ENCODE measurements at regions of chr18 and their contacts with region 1.

Region 1: DNA sequence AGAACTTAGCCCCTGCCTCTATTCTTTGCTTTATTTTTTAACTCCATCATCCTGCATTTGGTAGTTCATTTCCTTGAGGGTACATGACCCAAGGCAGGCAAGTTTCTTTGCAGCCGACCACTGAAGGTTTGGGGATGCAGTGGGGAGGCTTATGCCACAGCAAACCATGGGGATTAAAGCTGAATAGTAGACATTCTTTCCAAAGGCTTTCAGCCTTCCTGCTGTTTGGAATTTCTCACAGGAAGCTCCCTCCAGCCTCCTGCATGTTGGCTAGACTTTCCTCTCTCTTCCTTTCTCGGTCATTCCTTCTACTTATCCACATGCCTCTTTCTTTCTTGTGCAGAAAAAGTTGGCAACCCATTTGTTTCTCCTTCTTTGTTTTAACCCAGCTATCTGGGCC is 77.3 kb downstream of the SOCS6 start:
- DNase-seq: no peak
- CTCF ChIP-seq: no peak

Region 2: GRCh38 chr18:70015127-70015526 is 351.0 kb before region 1 on chr18:
- CTCF ChIA-PET with region 1: no interaction called
- POLR2A ChIA-PET with region 1: no interaction called
- DNase-seq: no peak
- CTCF ChIP-seq: no peak

Region 3: DNA sequence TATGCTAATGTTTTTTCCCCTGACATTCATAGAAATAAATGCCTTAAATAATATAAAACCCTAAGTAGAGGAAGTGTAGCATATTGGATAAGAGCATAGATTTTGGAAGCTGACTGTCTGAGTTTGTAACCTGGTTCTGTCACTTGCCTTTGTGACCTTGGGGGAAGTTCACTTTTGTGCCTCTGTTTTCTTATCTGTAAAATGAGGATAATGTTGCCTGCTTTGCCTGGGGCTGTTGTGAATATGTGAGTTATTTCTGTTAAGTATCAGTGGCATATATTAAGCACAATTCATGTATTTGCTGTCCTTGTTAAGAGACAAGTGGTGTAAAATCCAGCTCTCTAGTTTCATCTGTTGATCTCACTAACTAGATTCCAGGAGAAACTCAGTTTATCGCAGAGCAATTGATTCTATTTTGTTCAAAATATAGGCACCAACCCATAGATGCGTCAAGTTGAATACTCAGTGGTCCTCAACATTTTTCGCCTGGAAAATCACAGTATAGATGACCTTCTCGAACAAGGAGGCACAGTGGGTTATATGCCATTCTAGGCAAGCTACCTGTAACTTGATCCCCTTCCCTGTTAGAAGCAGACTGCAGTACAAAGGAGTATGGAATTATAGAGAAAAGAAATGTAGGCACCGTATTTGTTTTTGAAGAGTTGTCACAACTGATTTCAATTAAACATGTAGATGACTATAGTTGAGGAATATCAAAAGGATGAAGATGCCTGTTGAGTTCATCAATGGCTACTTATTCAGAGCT is 10.4 kb before region 1 on chr18:
- CTCF ChIA-PET with region 1: interaction called, 10 read pairs
- POLR2A ChIA-PET with region 1: interaction called, 5 read pairs
- DNase-seq: no peak
- CTCF ChIP-seq: no peak

Region 4: DNA sequence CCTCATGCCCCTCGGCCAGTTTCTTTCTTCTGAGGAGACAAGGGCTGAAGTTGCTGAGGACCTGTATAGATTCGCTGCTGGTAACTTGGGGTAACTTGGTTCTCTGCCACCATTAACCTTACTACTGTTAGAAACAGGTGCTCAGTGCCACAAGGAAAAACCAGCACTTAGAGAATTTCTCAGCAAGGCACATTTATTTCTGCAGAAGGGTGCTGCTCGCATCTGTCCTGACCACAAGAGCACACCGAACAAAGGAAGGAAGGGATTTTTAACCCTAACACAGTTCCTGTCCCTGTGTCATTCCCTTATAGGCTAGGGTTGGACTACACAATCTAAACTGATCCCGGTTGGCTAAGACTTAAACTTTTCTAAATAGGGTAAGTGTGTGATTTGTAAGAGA is 76.8 kb after region 1 on chr18:
- CTCF ChIA-PET with region 1: no interaction called
- POLR2A ChIA-PET with region 1: no interaction called
- DNase-seq: no peak
- CTCF ChIP-seq: no peak

Measured in GM10248 (cell line).